Activated CD8-positive, alpha-beta T cell treated with anti-CD3 and anti-CD28 coated beads, Interleukin-2, amount 10 ng/mL, durations not matched to agents 7 days and 5 days (primary cell): ENCODE measurements at regions of chr11 and their contacts with region 1.

Region 1: DNA sequence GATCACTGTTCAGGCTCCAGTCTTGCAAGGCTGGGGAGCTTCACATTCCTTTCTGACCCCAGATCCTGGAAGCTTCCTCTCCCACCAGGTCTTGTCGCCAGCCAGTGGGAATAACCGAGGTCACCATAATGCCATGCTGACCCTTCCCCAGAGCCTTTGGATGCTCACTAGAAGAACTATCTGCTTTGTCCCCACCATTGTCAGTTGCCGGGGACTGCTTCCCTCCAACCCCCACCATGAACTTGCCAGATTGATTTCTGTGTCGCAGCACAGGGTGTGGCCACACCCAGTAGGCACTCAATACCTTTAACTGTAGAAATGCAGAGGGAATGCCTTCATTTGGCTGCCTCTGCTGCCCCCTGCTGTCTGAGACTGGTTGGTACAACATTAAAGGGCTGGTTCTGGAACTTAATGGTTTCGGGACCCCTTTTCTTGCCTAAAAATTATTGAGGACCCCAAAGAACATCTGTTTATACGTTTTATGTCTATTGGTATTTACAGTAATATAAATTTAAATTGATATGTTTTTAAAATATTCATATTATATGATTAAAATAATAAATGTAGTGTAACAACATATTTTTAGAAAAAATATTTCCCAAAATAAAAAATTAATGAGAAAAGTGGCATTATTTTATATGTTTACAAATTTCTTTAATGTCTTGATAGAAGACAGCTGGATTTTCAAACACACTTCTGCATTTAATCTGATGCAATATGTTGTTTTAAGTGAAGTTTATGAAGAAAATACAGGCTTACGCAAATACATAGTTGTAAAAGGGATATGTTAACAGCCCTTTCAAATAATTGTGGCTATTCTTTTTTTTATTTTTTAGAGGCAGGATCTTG is 6.7 kb upstream of the GDPD5 start:
- DNase-seq: peak; percentile 90
- ATAC-seq: peak; percentile 85
- H3K4me3 Mint-ChIP-seq: peak overlapping the region; percentile 1
- H3K27ac Mint-ChIP-seq: peak overlapping the region; percentile 61
- H3K4me1 Mint-ChIP-seq: peaks cover 59% of the 10 kb centered on the region
- H3K27me3 Mint-ChIP-seq: peaks cover 9% of the 10 kb centered on the region

Region 2: GRCh38 chr11:75399344-75400145 is 132.9 kb before region 1 on chr11 and contains the start of gene RPS3:
- CTCF ChIA-PET with region 1: interaction called, 16 read pairs
- POLR2A ChIA-PET with region 1: no interaction called
- DNase-seq: peak; percentile 93
- ATAC-seq: peak; percentile 91
- H3K4me3 Mint-ChIP-seq: peak within 1 kb of the TSS; percentile 96
- H3K27ac Mint-ChIP-seq: peak within 1 kb of the TSS; percentile 98
- H3K4me1 Mint-ChIP-seq: peaks cover 46% of the 10 kb centered on the region
- H3K27me3 Mint-ChIP-seq: peaks cover 5% of the 10 kb centered on the region
- total RNA-seq, gene RPS3: 2,820 to 2,871 TPM

Region 3: DNA sequence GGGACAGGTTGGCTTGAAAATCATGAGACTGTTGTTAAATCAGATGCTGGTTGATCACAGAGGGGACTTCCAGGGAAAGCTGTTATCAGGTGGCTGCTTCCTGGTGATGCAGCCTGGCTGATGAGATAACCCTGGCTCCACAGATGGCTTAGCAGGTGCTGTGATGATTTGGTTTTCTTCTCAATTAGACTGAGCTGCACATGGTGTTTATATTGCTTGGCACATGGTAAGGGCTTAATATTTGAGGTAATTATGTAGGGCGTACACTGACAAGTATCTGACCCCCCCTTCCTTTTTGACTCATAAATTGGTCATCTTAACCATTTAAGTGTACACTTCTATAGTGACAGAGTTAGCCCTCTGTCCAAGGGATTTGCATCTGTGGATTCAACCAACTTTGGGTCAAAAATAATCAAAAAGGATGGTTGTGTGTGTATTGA is 126.1 kb before region 1 on chr11:
- CTCF ChIA-PET with region 1: interaction called, 16 read pairs
- POLR2A ChIA-PET with region 1: no interaction called
- DNase-seq: no peak
- ATAC-seq: no peak
- H3K4me3 Mint-ChIP-seq: no peak overlapping the region
- H3K27ac Mint-ChIP-seq: no peak overlapping the region
- H3K4me1 Mint-ChIP-seq: peaks cover 41% of the 10 kb centered on the region
- H3K27me3 Mint-ChIP-seq: no peaks in the 10 kb centered on the region

Region 4: DNA sequence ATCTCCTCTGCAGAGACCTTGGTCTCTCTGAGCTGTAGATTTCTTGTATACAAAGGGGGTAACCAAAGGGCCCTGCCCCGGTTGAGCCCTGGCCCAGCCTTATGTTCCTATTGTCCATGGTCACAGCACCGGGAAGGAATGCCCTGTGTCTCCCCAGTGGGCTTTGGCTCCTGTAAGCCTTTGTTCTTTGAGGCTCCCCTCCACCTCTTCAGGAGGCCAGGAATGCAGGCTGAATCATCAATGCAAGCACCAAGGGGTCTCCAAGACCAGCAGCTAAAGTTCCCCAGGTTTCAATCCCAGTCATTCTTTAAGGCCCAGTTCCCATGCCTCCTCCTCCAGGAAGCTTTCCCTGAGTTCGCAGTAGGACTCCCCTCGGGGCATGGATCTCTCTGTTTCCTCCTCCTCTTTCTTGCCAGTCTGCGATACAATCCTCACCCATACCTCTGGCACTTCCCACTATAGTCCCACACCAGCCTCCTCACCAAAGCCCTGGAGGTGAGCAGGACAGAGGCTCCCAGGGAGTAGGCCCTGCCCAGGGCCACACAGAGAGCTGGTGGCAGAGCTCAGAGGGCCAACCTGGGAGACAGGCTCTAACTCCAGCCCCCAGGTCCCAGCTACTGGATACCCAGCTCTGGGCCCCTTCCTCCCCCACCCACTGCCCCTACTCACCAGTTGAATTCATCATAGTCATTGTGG is 70.2 kb before region 1 on chr11:
- CTCF ChIA-PET with region 1: interaction called, 11 read pairs
- POLR2A ChIA-PET with region 1: no interaction called
- DNase-seq: no peak
- ATAC-seq: no peak
- H3K4me3 Mint-ChIP-seq: no peak overlapping the region
- H3K27ac Mint-ChIP-seq: no peak overlapping the region
- H3K4me1 Mint-ChIP-seq: no peaks in the 10 kb centered on the region
- H3K27me3 Mint-ChIP-seq: no peaks in the 10 kb centered on the region

Region 5: DNA sequence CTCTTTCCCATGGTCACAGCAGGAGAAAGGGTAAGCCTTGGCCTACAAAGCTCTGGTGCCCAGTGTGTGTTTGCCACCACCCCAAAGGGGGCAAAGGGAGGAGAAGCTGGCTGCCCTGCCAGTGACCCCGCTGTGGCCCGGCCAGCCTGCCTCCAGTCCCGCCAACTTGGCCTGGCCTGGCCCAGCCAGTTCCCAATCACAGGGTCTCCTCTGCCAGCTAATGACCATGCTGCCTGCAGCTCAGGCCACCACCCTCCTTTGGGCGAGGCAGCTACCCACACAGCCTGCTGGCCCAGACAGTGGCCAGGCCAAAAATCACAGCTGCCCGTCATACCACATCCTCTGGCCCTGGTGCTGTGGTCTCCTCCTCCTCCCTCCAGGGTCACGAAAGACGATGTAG is 11.7 kb before region 1 on chr11:
- CTCF ChIA-PET with region 1: interaction called, 46 read pairs
- POLR2A ChIA-PET with region 1: no interaction called
- DNase-seq: no peak
- ATAC-seq: no peak
- H3K4me3 Mint-ChIP-seq: no peak overlapping the region
- H3K27ac Mint-ChIP-seq: no peak overlapping the region
- H3K4me1 Mint-ChIP-seq: peaks cover 48% of the 10 kb centered on the region
- H3K27me3 Mint-ChIP-seq: peaks cover 15% of the 10 kb centered on the region

Region 6: GRCh38 chr11:75577207-75577606 is 44.8 kb after region 1 on chr11:
- CTCF ChIA-PET with region 1: no interaction called
- POLR2A ChIA-PET with region 1: no interaction called
- DNase-seq: peak; percentile 60
- ATAC-seq: no peak
- H3K4me3 Mint-ChIP-seq: no peak overlapping the region
- H3K27ac Mint-ChIP-seq: no peak overlapping the region
- H3K4me1 Mint-ChIP-seq: peaks cover 23% of the 10 kb centered on the region
- H3K27me3 Mint-ChIP-seq: no peaks in the 10 kb centered on the region